CD8-positive, alpha-beta memory T cell (primary cell): ENCODE measurements at regions of chr2 and their contacts with region 1.

Region 1: DNA sequence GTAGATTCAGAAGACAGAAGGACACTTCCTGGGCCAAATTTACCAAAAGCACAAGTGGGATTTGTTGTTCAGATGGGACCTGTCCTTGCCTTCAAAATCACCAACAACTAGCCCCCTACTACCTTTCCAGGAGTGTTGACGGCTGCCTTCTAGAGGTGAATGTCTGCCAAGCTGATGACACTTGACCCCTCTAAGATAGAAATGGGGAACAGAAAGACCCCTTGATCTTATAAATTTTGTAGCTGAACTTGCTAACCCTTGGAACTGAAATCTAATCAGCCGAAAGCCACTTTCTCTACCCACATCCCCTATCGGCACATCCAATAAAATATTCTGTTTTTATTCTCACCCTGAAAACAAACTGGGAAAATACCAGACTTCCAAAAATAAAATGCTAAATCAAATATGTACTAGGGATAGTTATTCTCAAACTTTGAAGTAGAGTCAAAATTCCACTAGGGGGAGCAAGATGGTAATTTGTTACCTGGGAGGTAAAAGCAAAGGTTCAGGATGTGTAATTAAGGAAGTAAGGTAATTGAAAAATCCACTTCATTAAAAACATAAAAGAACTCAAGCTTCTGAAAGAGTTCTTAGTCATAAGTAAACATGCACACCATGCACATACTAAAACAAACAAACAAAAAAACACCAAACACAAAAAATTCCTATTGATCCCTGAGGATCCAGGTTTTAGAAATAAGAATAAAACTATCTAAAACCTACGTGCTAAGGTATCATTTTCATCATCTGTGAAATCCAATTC is 119.2 kb downstream of the ANKRD44 start:
- DNase-seq: peak in 2 of 5 donors; percentile 64 to 69
- H3K4me3 ChIP-seq: peak overlapping the region; percentile 4
- H3K4me3 Mint-ChIP-seq: peak overlapping the region in 6 of 7 donors; percentile 41 to 78 (median 56)
- H3K27ac ChIP-seq: peak overlapping the region; percentile 45
- H3K27ac Mint-ChIP-seq: peak overlapping the region; percentile 72 to 99 (median 88)
- H3K4me1 ChIP-seq: peaks cover 87% of the 10 kb centered on the region
- H3K4me1 Mint-ChIP-seq: peaks cover 73 to 92% (median 91%) of the 10 kb centered on the region in 3 donors
- H3K27me3 ChIP-seq: no peaks in the 10 kb centered on the region
- H3K27me3 Mint-ChIP-seq: no peaks in the 10 kb centered on the region

Region 2: DNA sequence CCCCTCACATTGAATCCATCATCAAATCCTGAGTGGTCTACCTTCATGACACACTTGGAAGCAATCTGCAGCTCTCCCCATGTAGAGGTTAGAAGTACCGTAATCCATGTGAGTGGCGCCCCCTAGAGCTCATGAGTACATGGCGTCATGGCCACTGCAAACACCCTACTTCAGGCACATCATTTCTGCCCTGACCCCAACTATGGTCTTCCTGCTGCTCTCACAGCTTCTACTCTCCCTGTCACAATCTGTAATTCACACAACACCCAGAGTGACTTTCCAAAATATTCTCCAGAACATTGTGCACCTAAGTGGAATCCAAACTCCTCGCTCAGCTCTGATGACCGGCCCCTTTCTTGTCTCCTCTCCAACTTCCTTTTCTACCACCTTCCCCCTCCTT is 22.7 kb before region 1 on chr2:
- CTCF ChIA-PET with region 1: interaction called, 12 read pairs
- POLR2A ChIA-PET with region 1: no interaction called
- DNase-seq: peak; percentile 48 to 71 (median 57)
- H3K4me3 ChIP-seq: no peak overlapping the region
- H3K4me3 Mint-ChIP-seq: peak overlapping the region in 4 of 7 donors; percentile 9 to 34 (median 20)
- H3K27ac ChIP-seq: no peak overlapping the region
- H3K27ac Mint-ChIP-seq: peak overlapping the region; percentile 28 to 87 (median 72)
- H3K4me1 ChIP-seq: peaks cover 68% of the 10 kb centered on the region
- H3K4me1 Mint-ChIP-seq: peaks cover 68 to 86% (median 78%) of the 10 kb centered on the region in 3 donors
- H3K27me3 ChIP-seq: no peaks in the 10 kb centered on the region
- H3K27me3 Mint-ChIP-seq: no peaks in the 10 kb centered on the region

Region 3: GRCh38 chr2:197209742-197210408 is 18.5 kb after region 1 on chr2:
- CTCF ChIA-PET with region 1: interaction called, 11 read pairs
- POLR2A ChIA-PET with region 1: interaction called, 5 read pairs
- DNase-seq: peak; percentile 34 to 64 (median 36)
- H3K4me3 ChIP-seq: peak overlapping the region; percentile 21
- H3K4me3 Mint-ChIP-seq: peak overlapping the region; percentile 36 to 89 (median 74)
- H3K27ac ChIP-seq: peak overlapping the region; percentile 26
- H3K27ac Mint-ChIP-seq: peak overlapping the region; percentile 92 to 100 (median 96)
- H3K4me1 ChIP-seq: peaks cover 99% of the 10 kb centered on the region
- H3K4me1 Mint-ChIP-seq: peaks cover 97 to 99% (median 98%) of the 10 kb centered on the region in 3 donors
- H3K27me3 ChIP-seq: no peaks in the 10 kb centered on the region
- H3K27me3 Mint-ChIP-seq: no peaks in the 10 kb centered on the region